Right ventricle myocardium superior (tissue), 1 donor: ENCODE measurements at regions of chr3 and their contacts with region 1.

Region 1: DNA sequence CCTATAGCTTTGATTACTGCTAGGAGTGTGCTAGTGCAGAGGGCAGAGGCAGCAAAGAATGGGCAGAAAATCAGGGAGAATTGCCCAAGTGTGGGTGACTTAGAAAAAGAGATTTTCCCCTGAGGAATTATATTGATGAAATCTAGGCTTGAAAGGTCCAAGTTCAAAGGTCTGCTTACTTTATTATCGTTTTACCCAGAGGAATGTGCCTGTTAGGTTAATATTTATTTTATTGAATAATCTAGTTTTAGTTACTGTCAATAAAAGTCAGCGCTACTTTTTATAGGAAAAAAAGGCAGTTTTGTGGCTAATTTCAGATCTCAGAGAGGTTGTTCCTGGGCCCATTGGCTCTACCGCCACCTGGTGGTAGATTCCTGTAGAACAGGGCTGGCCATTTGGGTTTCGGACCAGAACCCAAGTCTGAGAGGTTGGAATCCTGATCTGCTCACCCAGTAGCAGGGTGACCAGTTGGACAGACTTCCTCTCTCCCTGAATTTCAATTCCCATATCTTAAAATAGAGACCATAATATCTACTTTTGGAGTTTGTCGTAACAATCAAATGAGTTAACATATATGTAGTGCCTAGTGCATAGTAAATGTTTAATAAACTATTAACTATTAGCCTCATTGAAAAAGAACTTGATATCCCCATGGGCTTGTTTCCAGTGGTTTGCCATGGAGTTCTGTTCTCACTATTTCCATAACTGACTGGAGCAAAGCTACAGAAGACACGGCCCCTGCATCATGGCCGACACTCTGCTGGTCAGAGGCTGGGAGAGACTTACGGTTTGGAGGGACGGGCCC is 62.7 kb upstream of the ZNF148 start:
- DNase-seq: peak; percentile 65
- ATAC-seq: peak; percentile 65

Region 2: DNA sequence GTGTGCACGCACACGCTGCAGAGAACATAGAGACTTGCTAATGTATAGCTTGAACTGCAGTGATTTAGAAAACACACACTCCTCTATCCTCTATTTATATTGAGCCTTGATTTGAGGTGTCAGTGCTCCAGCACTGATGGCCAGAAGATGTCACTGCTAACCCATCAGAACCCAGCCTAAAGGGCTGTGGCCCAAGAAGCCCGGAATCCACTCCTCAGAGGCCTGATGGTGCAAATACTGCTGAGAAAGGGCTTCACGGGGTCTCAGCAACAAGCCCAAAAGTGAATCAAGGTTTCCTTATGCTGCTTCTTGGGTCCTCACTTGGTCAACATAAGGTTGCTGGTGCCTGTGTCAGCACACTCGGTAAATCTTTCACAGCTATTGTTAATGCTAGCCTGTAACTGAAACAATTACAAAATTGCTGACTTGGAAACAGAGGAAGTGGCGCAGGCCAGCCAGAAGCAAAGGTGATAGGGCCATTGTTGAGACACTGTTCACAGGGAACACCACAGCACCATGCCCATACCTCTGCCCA is 442.3 kb before region 1 on chr3:
- intact Hi-C with region 1: loop called (anchors 5 kb)
- DNase-seq: peak; percentile 56
- ATAC-seq: peak; percentile 73

Region 3: GRCh38 chr3:125011941-125012340 is 425.9 kb before region 1 on chr3:
- intact Hi-C with region 1: no loop called
- DNase-seq: no peak
- ATAC-seq: no peak

Region 4: GRCh38 chr3:125462722-125463299 is 25.0 kb after region 1 on chr3:
- intact Hi-C with region 1: no loop called
- DNase-seq: no peak
- ATAC-seq: no peak